Transverse colon (tissue), 4 donors: ENCODE measurements at regions of chr6 and their contacts with region 1.

Region 1: DNA sequence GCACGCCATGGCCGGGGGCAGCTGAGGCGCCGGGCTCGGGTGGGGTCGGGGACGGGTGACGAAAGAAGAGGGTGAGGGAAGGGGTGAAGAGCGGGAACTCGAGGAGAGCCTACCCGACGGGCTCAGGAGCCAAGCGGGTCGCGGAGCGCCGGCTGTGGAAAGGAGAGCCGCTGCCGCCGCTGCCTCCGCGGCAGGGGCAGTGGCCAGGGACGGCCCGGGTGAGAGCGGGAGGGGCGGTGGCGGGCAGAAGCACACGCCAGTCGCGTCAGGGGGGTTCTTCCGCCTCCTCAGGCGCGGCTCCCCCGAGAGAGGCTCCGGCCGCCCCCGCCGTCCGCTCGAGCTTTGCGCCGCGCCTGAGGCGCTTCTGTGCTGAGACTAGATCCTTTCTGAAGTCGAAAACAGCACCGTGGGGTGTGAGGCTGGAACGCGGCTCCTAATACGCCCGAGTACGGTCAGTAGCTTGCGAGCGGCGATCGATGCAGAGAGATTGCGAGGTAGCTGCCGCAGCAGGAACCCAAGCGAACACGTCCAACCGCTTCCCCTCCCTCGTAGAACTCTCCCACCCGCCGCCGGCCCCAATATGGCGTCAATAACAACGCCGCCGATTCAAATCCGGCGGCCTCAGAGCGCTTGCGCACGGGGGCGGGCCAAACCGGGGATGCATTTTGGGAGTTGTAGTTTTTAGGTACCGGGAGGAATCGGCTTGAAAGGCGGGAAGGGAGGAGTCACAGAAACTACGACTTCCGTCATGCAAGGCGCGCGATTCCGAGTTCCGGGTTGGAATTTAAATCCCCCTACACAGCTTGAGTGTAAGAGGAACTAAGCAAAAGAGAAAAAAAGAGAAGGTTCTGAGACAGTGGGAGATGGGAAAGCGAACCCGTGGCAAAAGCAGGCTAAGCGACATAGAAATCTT is at the start of gene AKIRIN2:
- DNase-seq: peak; percentile 98
- H3K4me3 ChIP-seq: peak within 1 kb of the TSS; percentile 83 to 99 (median 92)
- H3K27ac ChIP-seq: peak within 1 kb of the TSS; percentile 97 to 100 (median 98)
- H3K4me1 ChIP-seq: peaks cover 8 to 37% (median 21%) of the 10 kb centered on the region in 4 donors
- H3K27me3 ChIP-seq: no peaks in the 10 kb centered on the region
- CTCF ChIP-seq: no peak
- EP300 ChIP-seq: no peak
- POLR2A ChIP-seq: peak; percentile 97
- total RNA-seq, gene AKIRIN2: 16.3 to 44.9 (median 20.7) TPM

Region 2: DNA sequence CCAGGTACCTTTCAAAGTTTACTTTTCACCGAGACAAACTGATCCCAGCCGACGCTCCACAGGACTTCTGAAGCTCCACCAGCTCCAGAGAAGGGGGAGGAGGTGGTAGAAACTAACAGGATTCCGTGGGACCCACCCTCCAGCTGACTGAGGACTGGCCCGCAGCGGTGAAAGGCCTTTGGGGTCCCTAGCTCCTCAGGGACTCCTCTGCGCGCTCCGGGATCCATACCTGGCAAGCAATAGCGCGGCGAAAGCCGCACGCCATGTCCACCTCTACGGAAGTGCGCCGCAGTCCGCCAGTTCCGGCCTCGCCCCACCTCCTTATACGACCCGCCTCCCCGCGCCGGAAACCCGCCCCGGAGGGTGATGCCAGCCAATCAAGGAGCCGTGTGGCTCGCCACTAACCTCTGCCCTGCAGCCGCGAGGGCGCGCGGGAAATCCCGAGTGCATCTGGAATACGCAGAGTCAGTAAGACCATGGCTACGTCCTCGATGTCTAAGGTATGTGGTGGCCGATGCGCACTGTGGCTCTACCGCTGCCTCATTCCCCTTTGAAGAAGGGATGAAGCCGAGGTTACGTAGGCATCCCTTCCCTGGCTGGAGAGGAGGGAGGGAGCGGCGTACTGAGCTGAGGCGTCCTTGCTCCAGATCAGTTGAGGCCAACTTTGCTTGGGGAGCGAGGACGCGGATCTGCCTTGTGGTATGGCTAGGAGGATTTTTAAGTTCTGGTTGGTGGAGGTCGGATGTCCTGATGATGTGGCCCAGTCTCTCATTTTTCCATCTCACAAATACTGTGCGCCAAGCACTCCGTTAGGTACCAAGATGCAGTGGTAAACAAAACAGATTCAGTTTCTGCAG is 112.0 kb before region 1 on chr6 and contains the starts of genes ORC3 and RARS2:
- in situ Hi-C with region 1: no loop called
- intact Hi-C with region 1: loop called (anchors 5 kb)
- DNase-seq: peak; percentile 97
- H3K4me3 ChIP-seq: peak within 1 kb of the TSS; percentile 66 to 93 (median 80)
- H3K27ac ChIP-seq: peak within 1 kb of the TSS; percentile 84 to 93 (median 88)
- H3K4me1 ChIP-seq: peaks cover 10 to 45% (median 24%) of the 10 kb centered on the region in 4 donors
- H3K27me3 ChIP-seq: no peaks in the 10 kb centered on the region
- CTCF ChIP-seq: no peak
- EP300 ChIP-seq: no peak
- POLR2A ChIP-seq: peak; percentile 96
- total RNA-seq, gene ORC3: 2.2 to 18.4 (median 17.8) TPM
- total RNA-seq, gene RARS2: 25.1 to 28.3 (median 26.9) TPM